Esophagus muscularis mucosa (tissue), 4 donors: ENCODE measurements at regions of chr6 and their contacts with region 1.

Region 1: GRCh38 chr6:28940858-28941680 is 17.3 kb upstream of the TRIM27 start:
- DNase-seq: peak; percentile 95
- H3K4me3 ChIP-seq: peak overlapping the region; percentile 59 to 71 (median 62)
- H3K27ac ChIP-seq: peak overlapping the region; percentile 76 to 86 (median 82)
- H3K4me1 ChIP-seq: peaks cover 8 to 38% (median 35%) of the 10 kb centered on the region in 4 donors
- H3K27me3 ChIP-seq: no peaks in the 10 kb centered on the region
- CTCF ChIP-seq: no peak
- EP300 ChIP-seq: no peak
- POLR2A ChIP-seq: no peak

Region 2: DNA sequence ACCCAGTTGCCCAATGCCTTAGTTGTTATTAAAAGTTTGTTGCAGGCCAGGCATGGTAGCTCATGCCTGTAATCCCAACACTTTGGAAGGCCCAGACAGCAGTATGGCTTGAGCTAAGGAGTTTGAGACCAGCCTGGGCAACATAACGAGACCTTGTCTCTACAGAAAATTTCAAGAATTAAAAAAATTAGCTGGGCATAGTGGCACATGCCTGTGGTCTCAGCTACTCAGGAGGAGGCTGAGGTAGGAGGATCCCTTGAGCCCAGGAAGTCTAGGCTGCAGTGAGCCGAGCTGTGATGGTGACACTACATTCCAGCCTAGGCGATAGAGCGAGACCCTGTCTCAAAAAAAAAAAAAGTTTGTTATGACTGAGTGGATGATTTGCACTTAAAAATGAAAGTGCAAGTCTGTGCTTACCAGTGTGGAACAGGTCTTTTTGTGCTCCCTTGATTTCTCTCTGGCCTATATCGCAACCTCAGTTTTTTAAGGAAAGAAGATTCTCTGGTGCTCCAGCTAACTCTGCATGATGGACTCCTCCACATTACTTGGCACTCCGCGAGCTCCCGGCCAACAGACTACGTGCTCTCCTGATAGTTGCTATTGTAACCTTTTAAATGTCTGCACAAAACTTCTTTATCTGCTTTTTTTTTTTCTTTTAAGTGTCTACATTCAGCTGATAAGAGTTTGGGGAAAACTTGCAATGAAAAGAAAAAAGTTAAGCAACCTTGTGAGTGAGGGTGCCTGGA is 569.2 kb before region 1 on chr6:
- intact Hi-C with region 1: no loop called
- DNase-seq: no peak
- H3K4me3 ChIP-seq: no peak overlapping the region
- H3K27ac ChIP-seq: no peak overlapping the region
- H3K4me1 ChIP-seq: no peaks in the 10 kb centered on the region
- H3K27me3 ChIP-seq: no peaks in the 10 kb centered on the region
- CTCF ChIP-seq: no peak
- EP300 ChIP-seq: no peak
- POLR2A ChIP-seq: no peak

Region 3: DNA sequence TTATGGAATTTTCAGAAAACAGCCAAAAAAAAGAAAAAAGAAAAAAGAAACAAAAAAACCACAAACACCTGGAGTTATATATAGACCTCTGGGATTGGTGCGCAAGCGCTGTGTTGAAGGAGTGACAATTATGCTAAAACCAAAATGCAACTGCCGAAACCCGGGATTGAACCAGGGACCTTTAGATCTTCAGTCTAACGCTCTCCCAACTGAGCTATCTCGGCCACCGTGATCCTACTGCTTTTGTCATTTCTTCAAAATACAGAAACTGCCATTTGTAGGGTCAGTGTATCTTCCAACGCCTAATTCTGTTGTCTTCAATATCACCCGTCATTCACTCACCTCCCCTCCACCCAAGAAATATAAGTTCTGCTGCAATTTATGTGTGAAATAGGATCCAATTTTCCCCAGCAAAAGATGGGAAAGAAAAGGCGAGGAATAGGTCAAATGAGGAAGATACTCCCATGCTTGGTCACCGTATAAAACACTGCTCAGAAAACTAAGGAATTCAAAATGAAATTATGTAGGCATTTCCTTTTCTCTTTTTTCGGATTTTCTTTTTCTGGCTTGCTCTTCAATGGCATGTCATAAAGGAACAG is 133.3 kb before region 1 on chr6:
- intact Hi-C with region 1: no loop called
- DNase-seq: no peak
- H3K4me3 ChIP-seq: no peak overlapping the region
- H3K27ac ChIP-seq: no peak overlapping the region
- H3K4me1 ChIP-seq: peaks cover 0 to 6% (median 0%) of the 10 kb centered on the region in 4 donors
- H3K27me3 ChIP-seq: peaks cover 0 to 99% (median 46%) of the 10 kb centered on the region in 4 donors
- CTCF ChIP-seq: no peak
- EP300 ChIP-seq: no peak
- POLR2A ChIP-seq: no peak

Region 4: GRCh38 chr6:28863604-28864320 is 77.3 kb before region 1 on chr6:
- intact Hi-C with region 1: loop called (anchors 5 kb)
- DNase-seq: peak; percentile 95
- H3K4me3 ChIP-seq: peak overlapping the region; percentile 75 to 79 (median 76)
- H3K27ac ChIP-seq: peak overlapping the region; percentile 74 to 82 (median 82)
- H3K4me1 ChIP-seq: peaks cover 15 to 19% (median 16%) of the 10 kb centered on the region in 4 donors
- H3K27me3 ChIP-seq: no peaks in the 10 kb centered on the region
- CTCF ChIP-seq: no peak
- EP300 ChIP-seq: no peak
- POLR2A ChIP-seq: no peak

Region 5: DNA sequence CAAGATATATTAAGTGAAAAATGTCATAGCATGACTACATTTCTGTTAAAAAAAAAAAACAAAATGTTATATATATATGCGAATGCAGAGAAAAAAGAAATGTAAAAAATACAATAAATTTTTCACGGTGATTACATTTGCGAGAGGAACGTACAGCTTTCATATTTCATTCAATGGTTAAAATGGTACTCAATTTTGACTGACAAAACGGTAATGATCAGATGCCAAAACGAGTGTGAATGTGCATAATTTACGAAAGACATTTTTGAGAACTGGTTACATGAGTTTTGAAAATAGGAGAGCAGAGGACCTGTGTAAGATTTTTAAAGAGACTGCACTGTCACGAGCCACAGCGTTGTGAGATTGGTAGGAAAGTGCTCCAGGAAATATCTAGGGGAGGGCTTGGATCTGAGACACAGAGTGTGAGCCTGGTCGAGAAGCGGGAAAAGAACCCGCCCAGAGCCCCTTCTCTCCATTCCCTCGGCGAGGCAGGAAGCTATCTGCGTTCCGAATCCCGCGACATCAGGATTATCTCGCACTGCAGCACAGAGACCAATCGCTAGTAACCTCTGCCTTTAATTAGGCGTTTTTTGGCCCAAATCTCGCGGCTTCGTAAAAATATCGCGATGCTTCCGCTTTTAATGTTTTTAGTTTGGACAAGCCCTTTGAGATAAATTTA is 45.8 kb before region 1 on chr6:
- intact Hi-C with region 1: loop called (anchors 5 kb)
- DNase-seq: peak; percentile 98
- H3K4me3 ChIP-seq: peak overlapping the region; percentile 63 to 68 (median 66)
- H3K27ac ChIP-seq: peak overlapping the region; percentile 89 to 98 (median 96)
- H3K4me1 ChIP-seq: peaks cover 0 to 16% (median 14%) of the 10 kb centered on the region in 4 donors
- H3K27me3 ChIP-seq: no peaks in the 10 kb centered on the region
- CTCF ChIP-seq: peak in 1 of 3 experiments; percentile 7
- EP300 ChIP-seq: no peak
- POLR2A ChIP-seq: peak; percentile 19

Region 6: DNA sequence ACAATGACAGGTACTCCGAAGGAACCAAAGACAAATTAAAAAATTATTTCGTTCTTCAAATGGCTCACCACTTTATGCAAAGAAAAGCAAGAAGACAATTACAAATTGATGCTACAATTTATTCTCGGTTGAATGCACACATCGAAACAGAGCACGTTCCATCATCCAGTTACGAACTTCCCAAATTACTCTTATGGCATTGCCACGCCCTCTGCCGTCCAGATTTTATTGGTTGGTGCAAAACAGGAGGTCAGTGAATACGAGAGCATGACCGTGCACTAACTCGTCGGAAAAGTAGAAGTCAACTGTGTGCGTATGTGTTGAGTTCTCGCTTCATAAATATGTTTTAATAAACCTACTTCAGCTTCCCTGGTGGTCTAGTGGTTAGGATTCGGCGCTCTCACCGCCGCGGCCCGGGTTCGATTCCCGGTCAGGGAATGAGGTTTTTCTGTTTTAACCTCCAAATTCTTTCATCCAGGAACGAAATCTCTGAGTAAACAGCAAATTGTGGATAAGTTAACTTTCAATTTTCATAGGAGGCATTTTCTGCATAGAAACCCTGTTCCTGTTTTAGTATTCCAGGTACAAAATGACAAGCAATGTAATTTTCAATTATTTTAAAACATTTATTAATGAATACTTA is 40.9 kb after region 1 on chr6:
- intact Hi-C with region 1: loop called (anchors 2 kb)
- DNase-seq: peak; percentile 96
- H3K4me3 ChIP-seq: peak overlapping the region; percentile 57 to 72 (median 65)
- H3K27ac ChIP-seq: peak overlapping the region; percentile 71 to 79 (median 79)
- H3K4me1 ChIP-seq: peaks cover 7 to 37% (median 30%) of the 10 kb centered on the region in 4 donors
- H3K27me3 ChIP-seq: peaks cover 0 to 12% (median 6%) of the 10 kb centered on the region in 4 donors
- CTCF ChIP-seq: no peak
- EP300 ChIP-seq: no peak
- POLR2A ChIP-seq: no peak

Region 7: DNA sequence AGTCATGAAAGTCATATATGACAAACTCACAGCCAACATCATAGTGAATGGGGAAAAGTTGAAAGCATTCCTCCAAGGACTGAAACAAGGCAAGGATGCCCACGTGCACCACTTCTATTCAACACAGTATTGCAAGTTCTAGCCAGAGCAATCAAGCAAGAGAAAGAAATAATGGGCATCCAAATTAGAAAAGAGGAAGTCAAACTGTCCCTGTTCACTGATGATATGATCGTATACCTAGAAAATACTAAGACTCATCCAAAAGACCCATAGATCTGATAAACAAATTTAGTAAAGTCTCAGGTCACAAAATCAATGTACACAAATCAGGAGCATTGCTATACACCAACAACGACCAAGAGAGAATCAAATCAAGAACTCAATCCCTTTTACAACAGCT is 1445.1 kb after region 1 on chr6:
- intact Hi-C with region 1: no loop called
- DNase-seq: no peak
- H3K4me3 ChIP-seq: no peak overlapping the region
- H3K27ac ChIP-seq: no peak overlapping the region
- H3K4me1 ChIP-seq: no peaks in the 10 kb centered on the region
- H3K27me3 ChIP-seq: peaks cover 0 to 79% (median 0%) of the 10 kb centered on the region in 4 donors
- CTCF ChIP-seq: no peak
- EP300 ChIP-seq: no peak
- POLR2A ChIP-seq: no peak